Tibial artery (tissue), 4 donors: ENCODE measurements at regions of chr2 and their contacts with region 1.

Region 1: GRCh38 chr2:81703831-81704230 is 1399.3 kb upstream of the LRRTM1 start:
- DNase-seq: no peak
- H3K4me3 ChIP-seq: no peak overlapping the region
- H3K27ac ChIP-seq: no peak overlapping the region
- H3K4me1 ChIP-seq: no peaks in the 10 kb centered on the region
- H3K27me3 ChIP-seq: no peaks in the 10 kb centered on the region
- CTCF ChIP-seq: no peak

Region 2: GRCh38 chr2:81672923-81673322 is 30.9 kb before region 1 on chr2:
- intact Hi-C with region 1: loop called (anchors 2 kb)
- DNase-seq: no peak
- H3K4me3 ChIP-seq: no peak overlapping the region
- H3K27ac ChIP-seq: no peak overlapping the region
- H3K4me1 ChIP-seq: no peaks in the 10 kb centered on the region
- H3K27me3 ChIP-seq: no peaks in the 10 kb centered on the region
- CTCF ChIP-seq: no peak